Posterior vena cava (tissue), 2 donors: ENCODE measurements at regions of chr3 and their contacts with region 1.

Region 1: DNA sequence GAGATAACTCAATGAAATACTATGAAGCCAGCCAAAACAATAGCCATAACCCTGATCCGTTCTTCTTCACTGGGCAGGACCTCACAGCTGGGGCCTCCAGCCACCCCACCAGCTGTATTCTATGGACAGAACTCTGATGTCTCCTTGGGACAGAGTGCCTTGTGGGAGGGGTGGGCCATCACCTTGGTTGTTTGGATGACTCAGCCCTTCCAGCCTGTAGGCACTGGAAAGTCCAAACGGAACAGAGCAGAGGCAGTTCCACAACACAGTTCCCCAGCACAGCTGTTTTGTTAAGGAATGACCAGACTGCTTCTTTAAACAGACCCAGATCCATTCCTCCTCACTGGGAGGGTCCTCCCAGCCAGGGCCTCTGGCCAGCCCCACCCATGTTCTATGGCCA is 31.9 kb upstream of the ZBED2 start:
- DNase-seq: no peak

Region 2: DNA sequence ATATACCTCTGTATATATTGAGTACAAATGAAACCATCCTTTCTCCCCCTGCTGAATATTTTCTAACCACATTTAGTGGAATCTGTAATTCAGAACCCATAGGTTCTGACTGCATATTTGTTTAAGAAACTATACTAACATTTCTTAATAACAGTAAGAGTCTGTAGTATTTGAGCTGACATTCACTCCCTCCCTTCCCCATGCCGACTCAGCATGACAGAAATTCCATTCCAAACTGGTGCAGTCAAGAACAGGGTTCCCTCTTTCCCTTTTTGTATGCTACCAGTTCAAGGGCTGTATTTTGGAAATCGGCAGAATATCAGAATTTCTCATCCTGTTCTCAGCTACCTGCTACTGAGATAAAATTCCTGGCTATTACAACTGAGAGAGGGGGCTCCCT is 1493.1 kb before region 1 on chr3:
- intact Hi-C with region 1: loop called in 1 of 2 experiments (anchors 5 kb)
- DNase-seq: no peak

Region 3: GRCh38 chr3:111737706-111738086 is 110.6 kb after region 1 on chr3:
- intact Hi-C with region 1: no loop called
- DNase-seq: no peak